Activated CD8-positive, alpha-beta T cell treated with anti-CD3 and anti-CD28 coated beads for 36 hours (primary cell): ENCODE measurements at regions of chr1 and their contacts with region 1.

Region 1: DNA sequence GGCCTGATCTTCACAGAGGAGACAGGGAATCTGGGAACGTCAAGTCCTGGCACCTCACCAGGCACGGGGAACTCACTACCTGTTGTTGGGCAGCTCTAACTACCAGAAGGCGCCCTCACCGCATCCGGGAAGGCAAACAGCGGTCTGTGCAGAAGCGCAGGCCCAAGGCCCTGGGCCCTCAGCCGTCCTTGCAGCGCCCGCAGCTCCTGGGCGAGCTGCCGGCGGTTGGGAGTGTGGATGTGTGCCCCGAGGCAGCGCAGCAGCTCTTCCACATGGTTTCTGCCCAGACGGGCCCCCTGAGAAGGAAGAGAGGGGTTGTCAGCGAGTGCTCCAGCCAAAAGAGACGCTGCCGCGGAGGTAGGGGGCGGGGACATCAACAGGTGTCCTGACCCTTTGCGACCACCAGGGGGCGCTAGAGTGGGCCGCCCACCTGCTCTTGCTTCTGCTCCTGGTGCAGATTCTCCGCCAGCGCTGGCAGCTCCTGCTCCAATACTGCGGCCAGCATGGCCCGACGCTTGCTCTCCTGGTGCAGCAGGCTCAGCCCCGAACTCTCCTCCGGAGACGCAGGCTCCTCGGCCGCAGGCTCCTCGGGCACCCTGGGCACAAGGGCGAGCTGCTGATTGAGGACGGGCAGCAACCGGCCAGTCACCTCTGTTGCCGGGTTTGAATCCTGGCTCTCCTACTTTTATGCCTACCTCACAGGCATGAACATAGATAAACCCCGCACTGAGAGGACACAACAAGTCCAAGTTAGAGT is 9.3 kb downstream of the MAP3K6 start:
- DNase-seq: peak; percentile 89
- ATAC-seq: peak; percentile 67
- H3K4me3 Mint-ChIP-seq: peak overlapping the region; percentile 75
- H3K27ac Mint-ChIP-seq: peak overlapping the region; percentile 90
- H3K4me1 Mint-ChIP-seq: peaks cover 44% of the 10 kb centered on the region
- H3K27me3 Mint-ChIP-seq: peaks cover 2% of the 10 kb centered on the region
- CTCF ChIP-seq: peak; percentile 99

Region 2: DNA sequence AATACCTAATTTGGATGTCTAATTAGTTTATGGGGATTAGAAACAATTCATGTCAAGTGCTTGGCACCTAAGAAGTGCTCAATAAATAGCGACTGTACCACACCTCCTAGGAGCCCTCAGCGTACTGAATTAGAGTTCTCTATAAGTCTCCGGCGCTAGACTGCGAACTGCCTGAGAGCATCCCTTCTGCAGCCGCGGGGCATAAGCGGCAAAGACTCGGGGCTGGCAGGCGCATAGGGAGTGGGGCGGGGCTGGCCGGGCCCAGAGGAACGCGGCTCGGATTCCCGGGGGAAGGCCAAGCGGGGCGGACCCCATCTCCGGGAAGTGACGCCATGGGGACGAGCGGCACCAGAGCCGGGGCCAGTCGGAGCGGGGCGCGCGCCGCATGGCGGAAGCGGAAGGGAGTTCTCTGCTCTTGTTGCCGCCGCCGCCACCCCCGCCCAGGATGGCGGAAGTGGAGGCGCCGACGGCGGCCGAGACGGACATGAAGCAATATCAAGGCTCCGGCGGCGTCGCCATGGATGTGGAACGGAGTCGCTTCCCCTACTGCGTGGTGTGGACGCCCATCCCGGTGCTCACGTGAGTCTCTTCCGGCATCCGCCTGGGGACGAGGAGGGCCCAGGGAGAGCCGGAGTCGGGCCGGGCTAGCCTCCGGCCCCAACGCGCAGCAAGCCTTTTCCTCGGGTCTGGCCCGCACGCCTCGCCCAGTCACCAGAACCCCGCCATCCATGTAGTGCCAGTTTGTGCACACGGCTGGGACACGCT is 35.5 kb before region 1 on chr1 and contains the start of gene TMEM222:
- CTCF ChIA-PET with region 1: interaction called, 14 read pairs
- POLR2A ChIA-PET with region 1: interaction called, 3 read pairs
- intact Hi-C with region 1: no loop called
- DNase-seq: peak; percentile 97
- ATAC-seq: peak; percentile 98
- H3K4me3 Mint-ChIP-seq: peak within 1 kb of the TSS; percentile 95
- H3K27ac Mint-ChIP-seq: peak within 1 kb of the TSS; percentile 95
- H3K4me1 Mint-ChIP-seq: peaks cover 39% of the 10 kb centered on the region
- H3K27me3 Mint-ChIP-seq: no peaks in the 10 kb centered on the region
- CTCF ChIP-seq: no peak
- total RNA-seq, gene TMEM222: 22.0 to 25.4 TPM

Region 3: DNA sequence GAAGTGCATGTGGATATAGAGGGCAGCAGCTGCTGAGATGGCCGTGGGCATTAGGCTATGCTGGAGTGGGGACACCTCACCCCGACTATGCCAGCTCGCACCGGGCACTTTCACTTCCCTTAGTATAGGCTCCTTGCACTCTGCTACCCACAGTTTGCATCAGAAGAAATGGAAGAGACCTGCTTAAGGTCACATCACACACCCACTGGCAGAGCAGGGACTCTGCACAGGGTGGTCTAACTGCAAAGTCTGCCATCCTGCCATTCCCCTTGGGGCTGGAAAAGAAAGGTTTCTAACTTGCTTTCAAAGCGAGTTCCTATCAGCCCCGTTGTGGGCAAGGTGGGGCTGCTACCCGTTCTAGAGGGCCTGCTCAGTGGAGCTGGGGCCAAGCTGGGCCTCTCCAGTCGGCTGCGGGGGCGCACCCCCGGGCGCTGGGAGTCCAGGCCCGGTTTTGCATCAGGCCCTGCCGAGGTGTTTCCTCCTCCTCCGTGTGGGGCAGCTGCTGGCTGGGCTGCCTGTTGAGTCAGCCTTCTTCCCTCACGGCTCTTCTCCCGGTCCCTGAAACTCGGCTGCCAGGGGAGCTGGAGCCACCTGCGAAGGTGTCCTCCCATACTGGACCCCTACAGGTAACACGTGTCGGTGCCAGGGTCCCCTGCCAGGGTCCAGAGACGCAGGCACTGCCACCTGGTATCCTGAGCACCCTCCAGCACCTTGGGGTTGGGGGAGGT is 15.8 kb before region 1 on chr1 and contains the start of gene SYTL1:
- CTCF ChIA-PET with region 1: interaction called, 91 read pairs
- POLR2A ChIA-PET with region 1: interaction called, 61 read pairs
- intact Hi-C with region 1: no loop called
- DNase-seq: peak; percentile 85
- ATAC-seq: peak; percentile 70
- H3K4me3 Mint-ChIP-seq: peak within 1 kb of the TSS; percentile 84
- H3K27ac Mint-ChIP-seq: peak within 1 kb of the TSS; percentile 89
- H3K4me1 Mint-ChIP-seq: peaks cover 39% of the 10 kb centered on the region
- H3K27me3 Mint-ChIP-seq: no peaks in the 10 kb centered on the region
- CTCF ChIP-seq: no peak
- total RNA-seq, gene SYTL1: 77.7 to 80.6 TPM

Region 4: GRCh38 chr1:27402349-27402754 is 44.9 kb after region 1 on chr1:
- CTCF ChIA-PET with region 1: interaction called, 36 read pairs
- POLR2A ChIA-PET with region 1: interaction called, 10 read pairs
- intact Hi-C with region 1: no loop called
- DNase-seq: no peak
- ATAC-seq: no peak
- H3K4me3 Mint-ChIP-seq: no peak overlapping the region
- H3K27ac Mint-ChIP-seq: peak overlapping the region; percentile 83
- H3K4me1 Mint-ChIP-seq: peaks cover 24% of the 10 kb centered on the region
- H3K27me3 Mint-ChIP-seq: no peaks in the 10 kb centered on the region
- CTCF ChIP-seq: no peak

Region 5: GRCh38 chr1:27634177-27634984 is 276.9 kb after region 1 on chr1:
- CTCF ChIA-PET with region 1: no interaction called
- POLR2A ChIA-PET with region 1: no interaction called
- intact Hi-C with region 1: no loop called
- DNase-seq: peak; percentile 50
- ATAC-seq: no peak
- H3K4me3 Mint-ChIP-seq: peak overlapping the region; percentile 32
- H3K27ac Mint-ChIP-seq: peak overlapping the region; percentile 26
- H3K4me1 Mint-ChIP-seq: peaks cover 68% of the 10 kb centered on the region
- H3K27me3 Mint-ChIP-seq: no peaks in the 10 kb centered on the region
- CTCF ChIP-seq: no peak